Right ventricle myocardium superior (tissue), 1 donor: ENCODE measurements at regions of chr11 and their contacts with region 1.

Region 1: GRCh38 chr11:129992161-129992944 is 10.3 kb downstream of the PRDM10 start:
- DNase-seq: no peak
- ATAC-seq: peak; percentile 72

Region 2: GRCh38 chr11:130124096-130124495 is 131.7 kb after region 1 on chr11:
- intact Hi-C with region 1: loop called (anchors 10 kb)
- DNase-seq: peak; percentile 87
- ATAC-seq: peak; percentile 96